A673 (cell line): ENCODE measurements at regions of chr4 and their contacts with region 1.

Region 1: GRCh38 chr4:72468904-72469502 is 100.0 kb downstream of the ADAMTS3 start:
- DNase-seq: peak; percentile 13
- H3K4me3 ChIP-seq: no peak overlapping the region
- H3K27ac ChIP-seq: no peak overlapping the region
- H3K4me1 ChIP-seq: no peaks in the 10 kb centered on the region
- H3K27me3 ChIP-seq: no peaks in the 10 kb centered on the region
- CTCF ChIP-seq: peak; percentile 53

Region 2: DNA sequence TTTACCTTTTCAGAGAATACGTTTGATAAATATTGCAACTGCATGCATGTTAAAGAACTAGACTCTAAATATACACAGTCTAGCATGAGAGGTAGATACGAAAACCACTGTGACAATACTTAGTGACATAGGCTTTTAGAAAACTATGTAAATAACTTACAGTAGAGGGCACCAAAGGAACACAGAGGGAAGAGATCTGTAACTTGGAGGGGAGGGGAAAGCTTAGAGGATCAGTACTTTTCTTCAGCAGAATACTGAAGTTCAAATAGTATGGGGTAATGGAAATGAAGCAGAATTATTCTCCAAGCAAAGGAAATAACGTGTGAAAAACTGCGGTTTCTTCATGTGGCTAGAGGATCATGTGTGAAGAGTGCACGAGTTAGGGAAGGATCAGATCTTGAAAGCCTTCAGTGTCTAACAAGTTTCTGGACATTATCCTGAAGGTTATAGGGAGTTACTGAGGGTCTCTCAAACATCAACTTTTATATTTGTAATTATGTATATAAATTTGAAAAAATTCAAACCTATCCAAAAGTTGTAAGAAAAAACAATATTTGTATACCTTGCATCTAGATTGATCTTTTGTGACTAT is 172.9 kb before region 1 on chr4:
- CTCF ChIA-PET with region 1: no interaction called
- POLR2A ChIA-PET with region 1: no interaction called
- intact Hi-C with region 1: loop called (anchors 10 kb)
- DNase-seq: peak; percentile 63
- H3K4me3 ChIP-seq: no peak overlapping the region
- H3K27ac ChIP-seq: no peak overlapping the region
- H3K4me1 ChIP-seq: no peaks in the 10 kb centered on the region
- H3K27me3 ChIP-seq: no peaks in the 10 kb centered on the region
- CTCF ChIP-seq: peak; percentile 59

Region 3: DNA sequence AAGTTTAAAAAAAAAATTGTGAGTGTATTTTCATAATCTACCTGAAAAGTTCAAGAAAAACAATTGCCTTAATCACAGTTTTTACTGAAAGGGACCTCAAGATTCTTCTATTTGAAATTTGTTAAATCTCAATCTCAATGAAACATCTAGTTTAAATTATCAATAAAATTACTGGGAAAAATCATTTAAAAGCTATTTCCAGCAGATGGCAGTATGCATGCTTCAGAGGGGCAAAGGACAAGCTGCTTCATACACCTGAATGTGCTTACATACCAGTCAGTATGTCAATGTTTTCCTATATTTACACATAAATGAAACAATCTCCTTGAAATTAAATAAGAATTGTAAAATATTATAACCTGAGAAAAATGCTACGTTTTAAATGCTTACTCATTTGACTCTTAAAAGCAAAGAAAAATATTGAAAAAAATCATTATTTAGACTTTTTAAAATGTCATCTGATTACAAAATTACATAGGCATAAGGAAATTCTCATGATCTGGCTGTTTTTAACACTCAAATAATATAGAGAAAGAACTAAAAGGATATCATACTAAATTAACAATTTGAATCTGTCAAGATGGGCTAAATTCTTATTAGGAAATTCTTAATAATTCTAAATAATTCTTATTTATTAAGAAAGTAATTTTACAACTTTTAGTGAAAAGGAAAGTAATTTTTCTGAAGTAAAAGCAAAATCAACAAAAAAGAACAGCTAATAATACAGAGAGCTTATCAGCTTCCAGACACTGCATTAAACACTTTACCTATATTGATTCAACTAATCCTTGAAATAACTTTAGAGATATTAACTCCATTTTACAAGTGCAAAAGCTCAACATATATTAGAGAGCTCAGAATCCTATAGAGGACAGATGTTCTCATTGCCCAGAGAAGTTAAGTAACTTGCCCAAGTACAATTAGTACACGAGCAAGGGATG is 142.0 kb before region 1 on chr4:
- CTCF ChIA-PET with region 1: no interaction called
- POLR2A ChIA-PET with region 1: no interaction called
- intact Hi-C with region 1: loop called (anchors 5 kb)
- DNase-seq: peak; percentile 28
- H3K4me3 ChIP-seq: no peak overlapping the region
- H3K27ac ChIP-seq: no peak overlapping the region
- H3K4me1 ChIP-seq: no peaks in the 10 kb centered on the region
- H3K27me3 ChIP-seq: no peaks in the 10 kb centered on the region
- CTCF ChIP-seq: peak; percentile 59